Activated CD4-positive, alpha-beta T cell treated with anti-CD3 and anti-CD28 coated beads for 36 hours (primary cell): ENCODE measurements at regions of chr1 and their contacts with region 1.

Region 1: DNA sequence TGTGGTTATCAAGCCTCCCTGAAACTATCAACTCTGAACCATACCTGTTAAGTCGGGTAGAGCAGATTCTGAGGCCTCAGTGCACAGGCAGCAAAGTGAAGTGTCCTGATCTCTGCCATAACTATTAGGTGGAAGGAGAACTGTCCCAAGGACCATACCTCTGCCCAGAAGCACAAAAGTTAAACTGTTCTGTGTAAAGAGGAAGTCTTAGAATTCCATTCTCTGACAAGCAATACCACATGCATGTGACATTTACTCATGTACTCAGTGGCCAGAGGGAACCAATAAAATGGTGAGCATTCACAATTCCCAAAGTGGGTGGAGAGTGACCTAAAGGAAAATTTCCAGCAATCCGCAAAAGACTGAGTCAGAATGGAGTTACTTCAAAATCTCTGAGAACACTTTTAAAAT is 61.0 kb downstream of the TOR3A start:
- DNase-seq: no peak
- ATAC-seq: no peak
- H3K4me3 Mint-ChIP-seq: peak overlapping the region; percentile 38
- H3K27ac Mint-ChIP-seq: peak overlapping the region; percentile 75
- H3K4me1 Mint-ChIP-seq: peaks cover 40% of the 10 kb centered on the region
- H3K27me3 Mint-ChIP-seq: no peaks in the 10 kb centered on the region

Region 2: GRCh38 chr1:179034720-179035119 is 108.2 kb before region 1 on chr1:
- CTCF ChIA-PET with region 1: no interaction called
- POLR2A ChIA-PET with region 1: no interaction called
- intact Hi-C with region 1: loop called (anchors 1 to 5 kb)
- DNase-seq: no peak
- ATAC-seq: peak; percentile 80
- H3K4me3 Mint-ChIP-seq: no peak overlapping the region
- H3K27ac Mint-ChIP-seq: peak overlapping the region; percentile 84
- H3K4me1 Mint-ChIP-seq: peaks cover 85% of the 10 kb centered on the region
- H3K27me3 Mint-ChIP-seq: no peaks in the 10 kb centered on the region

Region 3: DNA sequence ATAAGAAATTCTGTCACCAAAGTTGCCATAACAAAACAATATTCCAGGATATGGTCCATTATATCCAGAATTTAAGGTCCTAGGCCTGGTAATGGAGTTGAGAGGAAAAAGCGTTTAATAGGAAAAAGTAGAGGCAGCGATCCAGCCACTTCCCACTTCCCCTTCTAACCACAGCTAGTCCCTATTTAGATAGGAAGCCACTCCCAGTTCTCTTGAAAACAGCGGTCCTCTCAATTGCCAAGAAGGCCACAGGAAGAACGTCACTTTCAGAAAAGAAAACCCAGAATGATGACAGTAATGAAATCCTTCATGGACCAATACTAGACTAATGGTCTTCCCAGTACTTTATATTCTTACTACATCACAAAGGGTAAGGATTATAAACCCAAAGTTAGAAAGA is 48.0 kb after region 1 on chr1:
- CTCF ChIA-PET with region 1: no interaction called
- POLR2A ChIA-PET with region 1: no interaction called
- intact Hi-C with region 1: loop called in 1 of 2 experiments (anchors 5 kb)
- DNase-seq: no peak
- ATAC-seq: no peak
- H3K4me3 Mint-ChIP-seq: no peak overlapping the region
- H3K27ac Mint-ChIP-seq: peak overlapping the region; percentile 11
- H3K4me1 Mint-ChIP-seq: peaks cover 18% of the 10 kb centered on the region
- H3K27me3 Mint-ChIP-seq: no peaks in the 10 kb centered on the region

Region 4: DNA sequence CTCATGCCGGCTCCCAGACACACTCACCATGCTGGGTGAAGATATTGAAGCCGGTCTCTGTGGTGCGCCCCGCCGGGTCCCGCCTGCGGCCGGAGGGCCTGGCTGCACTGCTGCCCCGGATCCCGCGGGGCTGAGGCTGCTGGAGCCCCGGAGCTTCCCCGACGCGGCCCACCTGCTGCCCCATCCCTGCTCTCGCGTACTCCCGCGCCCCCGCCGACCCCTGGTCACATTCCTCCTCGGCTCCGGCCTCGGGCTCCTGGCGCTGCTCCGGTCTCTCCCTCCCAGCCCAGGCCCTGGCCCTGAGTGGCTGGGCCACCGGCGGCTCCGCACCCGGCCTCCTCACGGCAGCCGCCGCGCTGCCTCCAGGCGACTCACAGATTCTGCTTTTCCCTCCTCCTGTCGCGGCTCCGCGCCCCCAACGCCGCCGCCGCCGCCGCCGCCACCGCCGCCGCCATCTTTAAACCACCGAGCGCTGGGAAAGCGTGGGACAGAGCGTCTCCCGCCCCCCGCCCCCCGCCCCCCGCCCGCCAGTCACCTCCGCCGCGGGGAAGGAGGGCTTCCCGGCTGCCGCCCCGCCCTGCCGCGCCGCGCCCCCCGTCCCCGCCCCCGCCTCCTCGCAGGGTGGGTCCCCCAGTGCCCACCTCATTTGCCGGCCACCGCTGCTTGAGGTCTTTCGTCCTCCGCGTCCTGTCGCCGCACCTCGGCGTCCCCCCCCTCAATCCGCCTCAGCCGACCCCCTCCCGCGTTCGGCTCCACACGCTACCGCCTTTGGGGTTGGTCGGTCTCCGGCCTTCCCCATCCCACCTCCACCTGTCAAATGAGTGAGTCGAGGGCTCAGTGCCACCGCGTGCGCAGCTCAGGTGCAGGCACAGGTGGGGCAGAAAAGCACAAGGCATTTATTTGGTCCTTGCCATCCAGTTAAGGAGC is 86.6 kb after region 1 on chr1 and contains the start of gene ABL2:
- CTCF ChIA-PET with region 1: no interaction called
- POLR2A ChIA-PET with region 1: no interaction called
- intact Hi-C with region 1: loop called (anchors 1 to 5 kb)
- DNase-seq: peak; percentile 71
- ATAC-seq: peak; percentile 21
- H3K4me3 Mint-ChIP-seq: peak within 1 kb of the TSS; percentile 86
- H3K27ac Mint-ChIP-seq: peak within 1 kb of the TSS; percentile 88
- H3K4me1 Mint-ChIP-seq: peaks cover 36% of the 10 kb centered on the region
- H3K27me3 Mint-ChIP-seq: no peaks in the 10 kb centered on the region
- total RNA-seq, gene ABL2: 6.6 to 8.4 TPM